ENCODE measurements at regions of chr7 and their contacts with region 1.

Region 1: DNA sequence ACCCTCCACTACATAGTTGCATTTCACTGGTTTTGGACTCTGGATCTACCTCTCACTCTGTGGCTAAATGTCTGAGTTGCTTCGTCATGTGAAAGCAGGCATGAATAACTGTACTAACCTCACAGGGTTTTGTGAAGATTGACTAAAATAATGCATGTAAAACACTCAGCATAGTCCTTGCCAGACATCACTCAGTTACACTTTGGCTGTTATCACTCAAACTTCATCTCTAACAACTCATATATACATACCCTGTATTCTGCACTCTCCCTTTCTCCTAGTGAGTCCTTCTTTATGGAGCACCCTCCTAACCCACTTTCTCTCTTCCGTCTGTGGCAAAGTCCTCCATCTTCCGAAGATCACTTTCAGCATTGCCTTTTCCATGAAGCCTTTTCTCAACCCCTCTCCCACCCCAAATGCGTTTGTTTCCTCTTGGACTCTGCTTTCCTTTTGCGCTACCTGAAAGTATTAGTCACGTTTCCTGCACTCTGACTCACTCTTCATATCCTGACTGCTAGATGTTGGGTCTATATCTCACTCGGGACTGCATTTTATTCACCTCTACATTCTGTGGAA is 72.6 kb downstream of the OSBPL3 start:
- DNase-seq: peak; percentile 45
- H3K4me3 Mint-ChIP-seq: no peak overlapping the region
- H3K27ac Mint-ChIP-seq: no peak overlapping the region
- H3K4me1 Mint-ChIP-seq: peaks cover 48% of the 10 kb centered on the region
- H3K27me3 Mint-ChIP-seq: no peaks in the 10 kb centered on the region

Region 2: DNA sequence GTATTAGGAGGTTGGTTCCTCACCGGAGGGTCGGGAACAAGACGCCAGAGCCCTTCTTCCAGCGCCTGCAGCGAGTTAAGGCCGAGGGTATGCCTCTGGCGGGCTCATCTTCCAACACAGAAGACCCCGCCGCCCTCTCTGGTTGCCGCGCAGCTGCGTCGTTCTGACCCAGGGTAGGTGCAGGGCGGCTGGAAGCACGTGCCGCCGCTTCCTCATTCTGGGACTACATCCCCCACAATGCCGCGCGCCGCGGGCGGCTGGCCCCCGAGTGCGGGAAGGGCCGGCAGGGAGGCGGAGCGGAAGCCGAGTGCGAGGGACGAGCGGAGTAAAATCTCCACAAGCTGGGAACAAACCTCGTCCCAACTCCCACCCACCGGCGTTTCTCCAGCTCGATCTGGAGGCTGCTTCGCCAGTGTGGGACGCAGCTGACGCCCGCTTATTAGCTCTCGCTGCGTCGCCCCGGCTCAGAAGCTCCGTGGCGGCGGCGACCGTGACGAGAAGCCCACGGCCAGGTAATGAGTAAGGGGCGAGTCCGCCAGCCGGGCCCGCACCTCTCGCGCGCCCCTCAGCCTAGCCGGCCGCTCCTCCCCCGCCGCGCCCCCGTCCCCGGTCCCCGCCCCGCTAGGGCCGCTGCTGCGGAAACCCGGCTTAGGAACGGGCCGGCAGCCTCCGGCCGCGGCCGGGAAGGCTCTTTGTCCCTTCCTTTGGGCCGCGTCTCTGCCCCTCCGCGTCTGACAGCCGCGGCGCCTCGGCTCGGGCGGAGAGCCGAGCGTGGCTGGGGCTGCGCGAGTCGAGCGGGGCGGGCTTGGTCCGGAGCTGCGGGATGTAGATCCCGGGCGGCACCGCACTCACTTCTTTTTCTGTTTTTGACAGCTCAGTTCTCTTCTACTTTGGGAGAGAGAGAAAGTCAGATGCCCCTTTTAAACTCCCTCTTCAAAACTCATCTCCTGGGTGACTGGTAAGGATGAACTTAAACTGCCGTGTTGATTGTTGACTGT is 1310.0 kb before region 1 on chr7 and contains the start of gene CCDC126:
- intact Hi-C with region 1: loop called (anchors 5 kb)
- DNase-seq: peak; percentile 73
- H3K4me3 Mint-ChIP-seq: peak within 1 kb of the TSS; percentile 89
- H3K27ac Mint-ChIP-seq: peak within 1 kb of the TSS; percentile 78
- H3K4me1 Mint-ChIP-seq: peaks cover 53% of the 10 kb centered on the region
- H3K27me3 Mint-ChIP-seq: peaks cover 5% of the 10 kb centered on the region
- total RNA-seq, gene CCDC126: 6.1 and 6.3 TPM in 2 replicates

Region 3: GRCh38 chr7:24665564-24666294 is 241.7 kb before region 1 on chr7:
- intact Hi-C with region 1: no loop called
- DNase-seq: peak; percentile 12
- H3K4me3 Mint-ChIP-seq: no peak overlapping the region
- H3K27ac Mint-ChIP-seq: no peak overlapping the region
- H3K4me1 Mint-ChIP-seq: peaks cover 9% of the 10 kb centered on the region
- H3K27me3 Mint-ChIP-seq: no peaks in the 10 kb centered on the region

Region 4: DNA sequence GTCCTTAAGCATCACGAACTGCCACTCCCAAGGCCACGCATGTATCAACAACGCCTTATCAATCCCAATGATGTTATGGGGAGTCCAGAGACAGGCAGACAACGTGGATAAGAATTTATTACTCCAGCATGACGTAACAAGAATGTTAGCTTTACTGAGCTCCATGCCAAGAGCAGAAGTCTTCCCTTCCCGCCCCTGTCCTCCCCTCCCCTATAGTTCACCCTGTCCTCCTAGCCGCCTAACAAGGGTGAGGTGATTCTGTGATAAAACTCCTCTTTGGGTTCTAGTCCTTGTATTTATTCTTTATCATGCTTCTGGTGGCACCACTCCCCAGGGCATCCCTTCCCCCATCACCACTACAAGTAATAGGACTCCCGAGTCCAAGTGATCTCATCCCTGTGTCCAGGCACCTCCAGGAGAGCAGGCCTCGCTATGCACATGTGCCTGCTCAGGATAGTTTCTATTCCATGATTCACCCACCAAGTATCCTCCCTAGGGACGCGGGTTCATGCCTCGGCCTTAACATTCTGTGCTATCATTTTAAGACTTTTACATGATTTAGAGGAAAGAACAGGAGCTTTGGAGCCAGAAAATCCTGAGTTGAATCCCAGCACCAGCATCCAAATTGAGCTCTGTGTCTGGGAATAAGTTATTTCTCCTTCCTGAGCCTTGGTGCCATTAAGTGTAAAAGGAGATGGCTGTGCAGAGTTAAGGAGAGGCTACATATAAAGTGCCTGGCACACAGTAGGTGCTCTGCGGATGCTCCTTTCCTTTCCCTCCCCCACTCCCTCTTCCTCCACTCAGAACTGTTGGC is 165.5 kb before region 1 on chr7:
- intact Hi-C with region 1: no loop called
- DNase-seq: no peak
- H3K4me3 Mint-ChIP-seq: no peak overlapping the region
- H3K27ac Mint-ChIP-seq: no peak overlapping the region
- H3K4me1 Mint-ChIP-seq: no peaks in the 10 kb centered on the region
- H3K27me3 Mint-ChIP-seq: peaks cover 13% of the 10 kb centered on the region

Region 5: GRCh38 chr7:24819916-24820689 is 87.3 kb before region 1 on chr7:
- intact Hi-C with region 1: loop called (anchors 1 kb)
- DNase-seq: peak; percentile 71
- H3K4me3 Mint-ChIP-seq: peak overlapping the region; percentile 69
- H3K27ac Mint-ChIP-seq: peak overlapping the region; percentile 97
- H3K4me1 Mint-ChIP-seq: peaks cover 43% of the 10 kb centered on the region
- H3K27me3 Mint-ChIP-seq: no peaks in the 10 kb centered on the region

Region 6: GRCh38 chr7:24851786-24852185 is 55.6 kb before region 1 on chr7:
- intact Hi-C with region 1: no loop called
- DNase-seq: no peak
- H3K4me3 Mint-ChIP-seq: no peak overlapping the region
- H3K27ac Mint-ChIP-seq: peak overlapping the region; percentile 48
- H3K4me1 Mint-ChIP-seq: peaks cover 38% of the 10 kb centered on the region
- H3K27me3 Mint-ChIP-seq: no peaks in the 10 kb centered on the region

Region 7: GRCh38 chr7:24894429-24895221 is 12.8 kb before region 1 on chr7:
- intact Hi-C with region 1: loop called (anchors 1 kb)
- DNase-seq: no peak
- H3K4me3 Mint-ChIP-seq: no peak overlapping the region
- H3K27ac Mint-ChIP-seq: no peak overlapping the region
- H3K4me1 Mint-ChIP-seq: peaks cover 61% of the 10 kb centered on the region
- H3K27me3 Mint-ChIP-seq: no peaks in the 10 kb centered on the region

Region 8: GRCh38 chr7:24979863-24980533 is 72.6 kb after region 1 on chr7 and contains the start of gene OSBPL3:
- intact Hi-C with region 1: loop called (anchors 2 kb)
- DNase-seq: peak; percentile 92
- H3K4me3 Mint-ChIP-seq: peak within 1 kb of the TSS; percentile 95
- H3K27ac Mint-ChIP-seq: peak within 1 kb of the TSS; percentile 97
- H3K4me1 Mint-ChIP-seq: peaks cover 60% of the 10 kb centered on the region
- H3K27me3 Mint-ChIP-seq: no peaks in the 10 kb centered on the region
- total RNA-seq, gene OSBPL3: 74.2 and 76.2 TPM in 2 replicates

Region 9: GRCh38 chr7:25125137-25125946 is 217.9 kb after region 1 on chr7 and contains the start of gene CYCS:
- intact Hi-C with region 1: loop called (anchors 2 kb)
- DNase-seq: peak; percentile 99
- H3K4me3 Mint-ChIP-seq: peak within 1 kb of the TSS; percentile 94
- H3K27ac Mint-ChIP-seq: peak within 1 kb of the TSS; percentile 97
- H3K4me1 Mint-ChIP-seq: peaks cover 24% of the 10 kb centered on the region
- H3K27me3 Mint-ChIP-seq: no peaks in the 10 kb centered on the region
- total RNA-seq, gene CYCS: 235 and 251 TPM in 2 replicates

Measured in activated T-helper 2 cell treated with anti-CD3 and anti-CD28 coated beads, Interferon-gamma antibody, Interleukin-2, Interleukin-4, amounts not matched to agents 10 μg/mL and 5 μg/mL and 100 μg/mL, durations not matched to agents 14 hours and 24 hours and 36 hours (primary cell).